ENCODE measurements at regions of chr10 and their contacts with region 1.

Region 1: GRCh38 chr10:98474628-98475027 is 27.9 kb upstream of the HPS1 start:
- DNase-seq: no peak
- H3K4me3 ChIP-seq: no peak overlapping the region
- H3K27ac ChIP-seq: no peak overlapping the region
- H3K4me1 ChIP-seq: no peaks in the 10 kb centered on the region
- H3K27me3 ChIP-seq: no peaks in the 10 kb centered on the region
- CTCF ChIP-seq: no peak
- EP300 ChIP-seq: no peak
- POLR2A ChIP-seq: no peak

Region 2: DNA sequence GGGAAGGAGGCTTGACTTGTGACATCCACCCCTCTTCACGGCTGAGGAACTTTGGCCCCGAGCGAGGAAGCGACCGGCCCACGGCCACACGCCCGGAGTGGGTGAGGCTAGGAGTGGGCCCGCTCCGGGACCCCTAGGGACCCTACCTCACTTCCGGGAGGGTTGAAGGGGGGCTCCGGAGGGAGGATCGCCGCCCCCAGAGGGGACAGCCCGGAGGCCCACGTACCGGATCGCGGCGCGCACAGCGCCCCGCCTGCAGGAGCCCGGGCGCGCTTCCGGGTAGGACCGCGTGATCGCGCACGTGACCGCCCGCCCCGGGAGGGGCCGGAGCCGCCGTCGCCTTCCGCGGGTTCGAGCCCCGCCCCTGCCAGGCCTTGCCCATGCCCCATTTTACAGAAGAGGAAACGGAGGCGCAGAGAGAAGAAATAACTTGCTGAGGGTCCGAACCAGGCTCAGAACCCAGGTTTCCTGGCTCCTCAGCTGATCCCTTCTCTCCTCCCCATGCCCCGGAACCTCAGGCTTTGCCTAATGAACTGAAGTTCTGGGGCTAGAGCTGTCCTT is 27.9 kb before region 1 on chr10 and contains the start of gene HPS1:
- in situ Hi-C with region 1: no loop called
- intact Hi-C with region 1: loop called (anchors 1 kb)
- DNase-seq: peak; percentile 87
- H3K4me3 ChIP-seq: peak within 1 kb of the TSS; percentile 61 to 98 (median 95)
- H3K27ac ChIP-seq: peak within 1 kb of the TSS; percentile 89 to 97 (median 94)
- H3K4me1 ChIP-seq: peaks cover 5 to 19% (median 9%) of the 10 kb centered on the region in 4 donors
- H3K27me3 ChIP-seq: no peaks in the 10 kb centered on the region
- CTCF ChIP-seq: peak in 2 of 5 experiments; percentile 10 to 16
- EP300 ChIP-seq: no peak
- POLR2A ChIP-seq: peak; percentile 93
- total RNA-seq, gene HPS1: 62.9 to 160 (median 95.1) TPM

Region 3: GRCh38 chr10:99248824-99249223 is 774.2 kb after region 1 on chr10:
- in situ Hi-C with region 1: loop called (anchors 5 to 10 kb)
- intact Hi-C with region 1: loop called (anchors 5 kb)
- DNase-seq: no peak
- H3K4me3 ChIP-seq: no peak overlapping the region
- H3K27ac ChIP-seq: no peak overlapping the region
- H3K4me1 ChIP-seq: no peaks in the 10 kb centered on the region
- H3K27me3 ChIP-seq: no peaks in the 10 kb centered on the region
- CTCF ChIP-seq: no peak
- EP300 ChIP-seq: no peak
- POLR2A ChIP-seq: no peak